Activated CD4-positive, alpha-beta memory T cell treated with anti-CD3 and anti-CD28 coated beads for 36 hours (primary cell): ENCODE measurements at regions of chr4 and their contacts with region 1.

Region 1: DNA sequence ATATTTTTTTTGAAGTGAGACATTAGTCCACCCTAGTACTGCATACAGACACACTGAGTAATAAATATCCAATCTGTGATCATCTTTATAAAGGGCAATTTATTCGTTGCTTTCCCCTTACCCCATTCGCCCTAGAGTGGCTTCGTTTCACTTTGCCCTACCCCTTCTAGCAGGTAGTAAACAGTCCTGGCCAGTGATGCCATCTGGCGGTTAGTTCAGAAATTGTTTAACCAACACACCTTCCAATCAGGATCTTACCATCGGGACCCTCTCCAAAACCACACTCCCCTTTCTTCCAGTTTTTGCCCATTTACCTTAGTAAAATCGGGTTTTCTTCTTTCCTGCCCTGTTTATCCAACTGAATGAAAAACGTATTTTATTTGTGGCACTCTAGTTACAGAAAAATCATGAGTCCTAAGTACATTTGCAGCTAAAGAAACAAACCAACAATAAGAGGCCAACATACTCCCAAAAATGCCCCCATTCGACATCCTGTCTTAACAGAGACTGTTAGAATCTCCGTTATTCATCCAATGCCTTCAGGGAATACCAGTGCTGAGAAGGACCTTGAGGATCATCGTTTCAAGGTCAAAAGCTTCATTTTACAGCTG is 2.2 kb downstream of the PPA2 start:
- DNase-seq: peak; percentile 78
- H3K4me3 Mint-ChIP-seq: peak overlapping the region; percentile 99
- H3K27ac Mint-ChIP-seq: peak overlapping the region; percentile 99
- H3K4me1 Mint-ChIP-seq: peaks cover 51% of the 10 kb centered on the region
- H3K27me3 Mint-ChIP-seq: no peaks in the 10 kb centered on the region

Region 2: GRCh38 chr4:104860238-104861123 is 611.2 kb before region 1 on chr4:
- CTCF ChIA-PET with region 1: interaction called, 5 read pairs
- POLR2A ChIA-PET with region 1: no interaction called
- intact Hi-C with region 1: loop called (anchors 5 kb)
- DNase-seq: peak; percentile 39
- H3K4me3 Mint-ChIP-seq: no peak overlapping the region
- H3K27ac Mint-ChIP-seq: no peak overlapping the region
- H3K4me1 Mint-ChIP-seq: no peaks in the 10 kb centered on the region
- H3K27me3 Mint-ChIP-seq: no peaks in the 10 kb centered on the region

Region 3: DNA sequence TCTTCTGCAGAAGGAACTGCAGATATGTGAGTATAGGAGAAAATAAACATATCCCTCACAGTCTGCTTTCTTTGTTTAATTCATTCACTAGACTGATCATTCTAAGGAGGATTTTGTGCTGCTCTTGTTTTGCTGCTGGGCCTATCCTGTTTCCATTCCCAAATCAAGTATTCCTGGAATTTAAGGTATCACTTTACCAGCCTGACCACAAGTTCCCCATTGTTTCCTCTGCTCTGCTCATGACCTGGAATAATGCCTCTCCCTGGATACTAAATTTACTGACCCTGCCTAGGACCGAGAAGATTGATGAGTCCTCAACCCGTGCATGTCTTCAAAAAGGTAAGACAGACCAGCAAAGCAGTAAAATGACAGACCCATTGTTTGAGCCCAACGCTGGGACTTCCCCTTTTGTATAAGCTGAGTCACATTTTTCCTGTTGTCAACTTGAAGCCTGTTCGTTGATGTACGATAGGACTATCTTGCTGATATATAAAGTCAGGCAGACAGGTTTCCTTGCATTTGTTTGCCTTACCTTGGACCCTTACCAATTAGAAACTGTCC is 410.5 kb before region 1 on chr4:
- CTCF ChIA-PET with region 1: interaction called, 9 read pairs
- POLR2A ChIA-PET with region 1: no interaction called
- intact Hi-C with region 1: loop called (anchors 1 kb)
- DNase-seq: peak; percentile 67
- H3K4me3 Mint-ChIP-seq: peak overlapping the region; percentile 30
- H3K27ac Mint-ChIP-seq: peak overlapping the region; percentile 82
- H3K4me1 Mint-ChIP-seq: peaks cover 54% of the 10 kb centered on the region
- H3K27me3 Mint-ChIP-seq: peaks cover 2% of the 10 kb centered on the region

Region 4: DNA sequence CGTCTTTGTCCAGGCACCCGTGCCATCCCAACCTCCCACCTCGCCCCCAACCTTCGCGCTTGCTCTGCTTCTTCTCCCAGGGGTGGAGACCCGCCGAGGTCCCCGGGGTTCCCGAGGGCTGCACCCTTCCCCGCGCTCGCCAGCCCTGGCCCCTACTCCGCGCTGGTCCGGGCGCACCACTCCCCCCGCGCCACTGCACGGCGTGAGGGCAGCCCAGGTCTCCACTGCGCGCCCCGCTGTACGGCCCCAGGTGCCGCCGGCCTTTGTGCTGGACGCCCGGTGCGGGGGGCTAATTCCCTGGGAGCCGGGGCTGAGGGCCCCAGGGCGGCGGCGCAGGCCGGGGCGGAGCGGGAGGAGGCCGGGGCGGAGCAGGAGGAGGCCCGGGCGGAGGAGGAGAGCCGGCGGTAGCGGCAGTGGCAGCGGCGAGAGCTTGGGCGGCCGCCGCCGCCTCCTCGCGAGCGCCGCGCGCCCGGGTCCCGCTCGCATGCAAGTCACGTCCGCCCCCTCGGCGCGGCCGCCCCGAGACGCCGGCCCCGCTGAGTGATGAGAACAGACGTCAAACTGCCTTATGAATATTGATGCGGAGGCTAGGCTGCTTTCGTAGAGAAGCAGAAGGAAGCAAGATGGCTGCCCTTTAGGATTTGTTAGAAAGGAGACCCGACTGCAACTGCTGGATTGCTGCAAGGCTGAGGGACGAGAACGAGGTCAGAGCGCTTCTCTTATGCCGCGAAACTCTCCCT is 325.2 kb before region 1 on chr4 and contains the start of gene TET2:
- CTCF ChIA-PET with region 1: interaction called, 19 read pairs
- POLR2A ChIA-PET with region 1: interaction called, 19 read pairs
- intact Hi-C with region 1: loop called (anchors 1 kb)
- DNase-seq: peak; percentile 88
- H3K4me3 Mint-ChIP-seq: peak within 1 kb of the TSS; percentile 99
- H3K27ac Mint-ChIP-seq: peak within 1 kb of the TSS; percentile 99
- H3K4me1 Mint-ChIP-seq: peaks cover 35% of the 10 kb centered on the region
- H3K27me3 Mint-ChIP-seq: no peaks in the 10 kb centered on the region
- total RNA-seq, gene TET2: 30.2 to 30.6 TPM

Region 5: DNA sequence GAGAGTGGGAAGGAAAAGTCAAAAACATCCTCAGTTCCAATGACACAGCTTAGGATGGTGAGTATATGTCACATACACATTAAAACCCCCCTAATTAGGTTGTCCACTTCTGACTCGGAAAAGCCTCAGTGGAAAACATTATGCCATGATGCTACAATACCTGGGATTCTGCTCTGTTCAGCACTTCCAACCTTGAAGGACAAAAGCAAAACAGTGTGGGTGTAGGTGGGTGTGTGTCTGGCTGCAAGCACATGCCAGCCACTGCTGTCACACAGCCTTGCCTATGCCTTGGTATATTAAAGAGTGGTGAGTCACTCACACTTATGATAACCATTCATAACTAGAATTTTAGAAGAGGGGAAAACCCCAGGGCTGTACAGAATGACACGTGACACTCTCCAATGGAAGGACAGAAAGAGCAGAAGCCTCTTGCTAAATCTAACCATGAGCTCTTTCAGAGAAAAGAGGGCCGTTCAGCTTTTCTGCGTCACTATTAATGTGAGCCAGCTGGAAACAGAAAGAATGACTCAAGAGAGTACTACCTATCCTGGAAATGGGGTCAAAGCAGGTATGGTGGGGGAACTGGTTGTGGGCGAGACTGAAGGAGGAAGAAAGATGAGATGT is 165.4 kb before region 1 on chr4:
- CTCF ChIA-PET with region 1: interaction called, 23 read pairs
- POLR2A ChIA-PET with region 1: interaction called, 24 read pairs
- intact Hi-C with region 1: loop called (anchors 1 kb)
- DNase-seq: peak; percentile 83
- H3K4me3 Mint-ChIP-seq: peak overlapping the region; percentile 30
- H3K27ac Mint-ChIP-seq: peak overlapping the region; percentile 92
- H3K4me1 Mint-ChIP-seq: peaks cover 25% of the 10 kb centered on the region
- H3K27me3 Mint-ChIP-seq: no peaks in the 10 kb centered on the region

Region 6: DNA sequence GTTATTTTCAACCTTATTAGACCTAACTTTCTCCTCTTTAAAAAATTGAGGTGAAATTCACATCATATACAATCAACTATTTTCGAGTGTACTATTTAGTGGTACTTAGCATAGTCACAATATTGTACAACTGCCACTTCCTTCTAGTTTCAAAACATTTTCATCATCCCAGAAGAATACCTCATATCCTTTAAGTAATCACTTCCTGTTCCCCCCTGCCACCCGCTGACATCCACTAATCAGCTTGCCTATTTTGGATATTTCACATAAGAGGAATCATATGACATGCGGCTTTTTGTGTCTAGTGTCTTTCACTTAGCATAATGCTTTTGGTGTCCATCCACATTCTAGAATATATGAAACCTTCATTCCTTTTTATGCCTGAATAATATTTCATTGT is 12.2 kb after region 1 on chr4:
- CTCF ChIA-PET with region 1: interaction called, 10 read pairs
- POLR2A ChIA-PET with region 1: interaction called, 3 read pairs
- intact Hi-C with region 1: no loop called
- DNase-seq: no peak
- H3K4me3 Mint-ChIP-seq: no peak overlapping the region
- H3K27ac Mint-ChIP-seq: no peak overlapping the region
- H3K4me1 Mint-ChIP-seq: no peaks in the 10 kb centered on the region
- H3K27me3 Mint-ChIP-seq: peaks cover 10% of the 10 kb centered on the region